ENCODE measurements at regions of chr2 and their contacts with region 1.

Region 1: GRCh38 chr2:95728878-95729596 is 137.2 kb downstream of the TRIM43 start:
- DNase-seq: peak; percentile 74 to 82
- H3K4me3 ChIP-seq: no peak overlapping the region
- H3K27ac ChIP-seq: no peak overlapping the region
- H3K4me1 ChIP-seq: no peaks in the 10 kb centered on the region
- H3K27me3 ChIP-seq: peaks cover 5% of the 10 kb centered on the region; the same call in 1 of the 2 replicates
- CTCF ChIP-seq: peak; percentile 90

Region 2: DNA sequence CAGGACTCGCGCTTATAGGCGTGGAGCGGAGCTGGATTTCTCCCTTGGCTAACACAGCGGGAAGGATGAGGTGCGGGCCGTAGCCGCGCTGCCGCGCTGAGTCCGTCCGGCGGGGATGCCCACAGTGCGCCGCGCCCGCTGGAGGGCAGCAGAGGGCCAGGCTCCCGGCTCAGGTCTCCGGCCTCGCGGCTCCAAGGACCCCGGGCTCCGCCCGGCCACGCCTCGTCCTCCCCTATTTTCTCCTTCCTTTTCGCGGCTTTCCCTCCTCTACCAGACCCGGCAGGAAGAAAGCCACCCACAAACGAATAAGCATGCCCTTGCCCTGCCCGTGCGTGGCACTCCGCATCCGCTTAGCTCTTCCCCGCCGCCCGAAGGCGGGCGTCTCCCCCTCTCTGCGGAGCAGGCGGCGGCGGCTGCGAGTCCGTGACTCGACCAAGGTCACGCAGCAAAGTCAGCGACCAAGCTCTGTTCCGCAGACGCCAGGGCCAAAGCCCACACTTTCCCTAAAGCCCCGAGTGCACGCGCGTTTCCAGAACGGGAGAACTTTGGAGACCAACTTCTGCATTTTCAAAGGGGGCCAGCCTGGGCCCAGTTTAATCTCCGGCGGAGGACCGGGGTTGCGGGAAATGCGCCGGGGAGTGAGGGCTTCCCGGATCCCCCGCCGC is 383.3 kb before region 1 on chr2:
- CTCF ChIA-PET with region 1: no interaction called
- POLR2A ChIA-PET with region 1: no interaction called
- intact Hi-C with region 1: loop called (anchors 2 kb)
- DNase-seq: peak; percentile 66 to 85
- H3K4me3 ChIP-seq: peak overlapping the region; percentile 84
- H3K27ac ChIP-seq: no peak overlapping the region
- H3K4me1 ChIP-seq: peaks cover 5% of the 10 kb centered on the region; the same call in 1 of the 2 replicates
- H3K27me3 ChIP-seq: peaks cover 69% of the 10 kb centered on the region
- CTCF ChIP-seq: peak; percentile 90

Region 3: DNA sequence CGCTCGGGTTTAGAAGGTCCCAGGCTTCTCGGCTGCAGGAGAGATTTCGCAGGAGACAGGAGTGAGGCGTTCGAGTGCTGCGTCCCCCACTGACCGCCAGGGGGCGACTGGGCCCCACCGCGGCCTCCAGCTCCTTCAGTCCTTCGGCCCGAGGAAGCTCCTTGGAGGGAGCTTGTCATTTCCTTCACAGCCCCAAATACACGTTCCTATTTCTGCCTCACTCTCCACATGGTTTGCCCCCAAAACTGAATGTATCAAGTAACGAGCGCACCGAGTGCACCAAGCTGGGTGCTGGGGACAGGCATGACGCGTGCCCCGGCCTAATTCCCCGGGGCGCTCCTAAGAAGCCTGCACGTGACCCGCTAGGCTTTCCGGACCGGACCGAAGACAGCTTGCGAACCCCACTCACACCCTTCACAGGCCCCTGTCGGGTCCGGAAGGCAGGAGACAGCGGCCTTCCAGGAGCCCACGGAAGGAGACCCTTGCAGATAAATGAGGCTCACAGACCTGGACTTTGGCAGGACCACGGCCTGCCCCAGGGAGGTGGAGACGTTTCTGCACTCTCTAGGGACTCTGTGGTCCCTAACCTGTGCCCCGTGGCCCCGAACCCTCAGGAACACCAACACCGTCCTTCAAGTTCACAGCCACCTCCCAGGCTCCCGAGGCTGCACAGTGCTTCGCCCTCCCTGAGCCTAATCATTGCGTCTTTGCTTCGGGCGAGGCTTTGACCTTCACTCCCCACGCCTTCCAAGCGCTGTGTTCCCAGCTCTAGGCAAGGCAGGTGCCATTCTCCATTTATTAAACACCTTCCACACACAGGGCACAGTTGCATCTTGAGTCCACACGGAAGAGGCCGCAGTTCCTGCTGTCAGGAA is 339.6 kb before region 1 on chr2:
- CTCF ChIA-PET with region 1: interaction called, 3 read pairs
- POLR2A ChIA-PET with region 1: no interaction called
- intact Hi-C with region 1: loop called (anchors 1 kb)
- DNase-seq: peak in 1 of 2 experiments; percentile 74
- H3K4me3 ChIP-seq: peak overlapping the region; percentile 18; the same call in 1 of the 2 replicates
- H3K27ac ChIP-seq: no peak overlapping the region
- H3K4me1 ChIP-seq: 0 out of 2 replicates have a peak, but pooled peaks cover 4% of the 10 kb centered on the region
- H3K27me3 ChIP-seq: peaks cover 20% of the 10 kb centered on the region; the same call in 1 of the 2 replicates
- CTCF ChIP-seq: peak; percentile 97

Region 4: GRCh38 chr2:95526360-95527341 is 202.4 kb before region 1 on chr2:
- CTCF ChIA-PET with region 1: no interaction called
- POLR2A ChIA-PET with region 1: no interaction called
- intact Hi-C with region 1: loop called (anchors 5 kb)
- DNase-seq: peak; percentile 72 to 81
- H3K4me3 ChIP-seq: peak overlapping the region; percentile 96
- H3K27ac ChIP-seq: peak overlapping the region; percentile 64
- H3K4me1 ChIP-seq: peaks cover 13% of the 10 kb centered on the region
- H3K27me3 ChIP-seq: no peaks in the 10 kb centered on the region
- CTCF ChIP-seq: peak; percentile 61; the same call in 1 of the 2 replicates